K562 (cell line): ENCODE measurements at regions of chr1 and their contacts with region 1.

Region 1: GRCh38 chr1:51445351-51446090 is 73.5 kb downstream of the EPS15 start:
- DNase-seq: no peak
- ATAC-seq: no peak; the same call in 1 of the 3 replicates
- H3K4me3 ChIP-seq: no peak overlapping the region
- H3K27ac ChIP-seq: no peak overlapping the region; the same call in 2 of the 3 replicates
- H3K4me1 ChIP-seq: peaks cover 0 to 16% of the 10 kb centered on the region in 2 experiments; a peak in 4 of 5 replicates
- H3K27me3 ChIP-seq: no peaks in the 10 kb centered on the region
- CTCF ChIP-seq: no peak
- EP300 ChIP-seq: no peak
- POLR2A ChIP-seq: no peak
- RAD21 ChIP-seq: no peak

Region 2: GRCh38 chr1:51433269-51433971 is 12.1 kb before region 1 on chr1:
- CTCF ChIA-PET with region 1: no interaction called
- POLR2A ChIA-PET with region 1: interaction called, 13 read pairs
- in situ Hi-C with region 1: no loop called
- intact Hi-C with region 1: no loop called
- DNase-seq: peak in 2 of 4 experiments; percentile 20 to 37
- ATAC-seq: peak; percentile 4; the same call in 2 of the 3 replicates
- H3K4me3 ChIP-seq: no peak overlapping the region
- H3K27ac ChIP-seq: peak overlapping the region; percentile 73
- H3K4me1 ChIP-seq: peaks cover 13 to 35% of the 10 kb centered on the region in 2 experiments
- H3K27me3 ChIP-seq: no peaks in the 10 kb centered on the region
- CTCF ChIP-seq: no peak
- EP300 ChIP-seq: peak; percentile 33; the same call in 1 of the 2 replicates
- POLR2A ChIP-seq: no peak
- RAD21 ChIP-seq: no peak

Region 3: GRCh38 chr1:51535006-51535592 is 89.6 kb after region 1 on chr1:
- CTCF ChIA-PET with region 1: interaction called, 4 read pairs
- POLR2A ChIA-PET with region 1: no interaction called
- in situ Hi-C with region 1: no loop called
- intact Hi-C with region 1: loop called (anchors 5 kb)
- DNase-seq: peak in 3 of 4 experiments; percentile 31 to 74 (median 61)
- ATAC-seq: peak; percentile 84
- H3K4me3 ChIP-seq: no peak overlapping the region
- H3K27ac ChIP-seq: no peak overlapping the region
- H3K4me1 ChIP-seq: peaks cover 0 to 16% of the 10 kb centered on the region in 2 experiments; a peak in 2 of 5 replicates
- H3K27me3 ChIP-seq: no peaks in the 10 kb centered on the region
- CTCF ChIP-seq: peak; percentile 75 to 93 (median 85)
- EP300 ChIP-seq: no peak
- POLR2A ChIP-seq: no peak
- RAD21 ChIP-seq: peak; percentile 83 to 92